Heart left ventricle (tissue), 16 donors: ENCODE measurements at regions of chr17 and their contacts with region 1.

Region 1: DNA sequence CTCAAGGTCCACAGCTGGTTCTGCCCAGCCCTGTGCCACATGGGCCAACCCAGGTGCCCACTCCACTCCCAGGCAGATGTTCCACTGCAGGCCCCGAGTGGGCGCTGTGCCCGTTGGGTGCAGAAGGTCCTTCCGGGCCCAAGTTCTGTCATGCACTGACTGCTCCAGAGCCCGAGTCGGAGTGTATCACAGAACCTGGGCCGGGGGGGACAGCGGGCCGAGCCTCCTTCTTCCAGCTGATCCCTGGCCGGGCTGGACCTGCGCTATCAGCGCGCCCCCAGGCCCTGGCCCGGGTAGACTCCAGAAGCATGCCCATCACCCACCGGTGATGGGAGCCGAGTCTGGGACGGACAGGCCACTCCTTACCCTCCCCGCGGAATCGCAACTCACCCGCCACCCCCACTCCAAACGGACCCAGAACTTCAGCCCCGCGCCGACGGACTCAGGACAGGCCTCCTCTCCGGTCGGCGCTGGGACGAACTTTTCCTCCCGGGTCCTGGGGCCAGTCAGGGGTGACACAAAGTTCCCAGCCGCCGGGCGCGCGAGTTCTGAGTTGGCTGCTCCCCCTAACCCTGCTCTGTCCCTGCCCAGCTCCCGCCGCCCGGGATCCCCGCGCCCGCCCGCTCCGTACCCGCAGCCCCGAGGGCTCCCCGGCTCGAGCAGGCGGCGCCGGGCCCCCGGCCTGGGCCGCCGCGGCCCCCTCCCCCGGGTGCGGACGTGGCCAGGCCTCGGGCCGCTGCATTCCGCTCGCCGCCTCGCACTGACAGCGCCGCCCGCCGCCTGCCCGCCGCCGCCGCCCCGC is at the start of gene COPZ2:
- DNase-seq: peak; percentile 70 to 85 (median 78)
- ATAC-seq: peak; percentile 65 to 93 (median 88)
- H3K4me3 ChIP-seq: peak within 1 kb of the TSS; percentile 35 to 89 (median 70)
- H3K27ac ChIP-seq: peak within 1 kb of the TSS; percentile 27 to 86 (median 80)
- H3K4me1 ChIP-seq: peaks cover 0 to 17% (median 11%) of the 10 kb centered on the region in 12 donors
- H3K27me3 ChIP-seq: peaks cover 0 to 16% (median 0%) of the 10 kb centered on the region in 9 donors
- CTCF ChIP-seq: peak; percentile 43 to 70 (median 54)
- POLR2A ChIP-seq: no peak
- total RNA-seq, gene COPZ2: 35.4 to 64.3 (median 54.8) TPM

Region 2: GRCh38 chr17:48047741-48048383 is 10.6 kb after region 1 on chr17 and contains the start of gene NFE2L1:
- intact Hi-C with region 1: loop called in 1 of 10 experiments (anchors 2 kb)
- DNase-seq: peak; percentile 99 to 100 (median 100)
- ATAC-seq: peak; percentile 86 to 95 (median 90)
- H3K4me3 ChIP-seq: peak within 1 kb of the TSS; percentile 52 to 96 (median 86)
- H3K27ac ChIP-seq: peak within 1 kb of the TSS; percentile 96 to 100 (median 99)
- H3K4me1 ChIP-seq: peaks cover 9 to 61% (median 49%) of the 10 kb centered on the region in 12 donors
- H3K27me3 ChIP-seq: no peaks in the 10 kb centered on the region
- CTCF ChIP-seq: no peak
- POLR2A ChIP-seq: peak in 1 of 2 donors; percentile 56
- total RNA-seq, gene NFE2L1: 375 to 1,055 (median 606) TPM

Region 3: GRCh38 chr17:48074315-48075081 is 37.3 kb after region 1 on chr17:
- intact Hi-C with region 1: loop called in 1 of 10 experiments (anchors 2 kb)
- DNase-seq: peak in 4 of 5 donors; percentile 74 to 80 (median 76)
- ATAC-seq: peak; percentile 75 to 87 (median 83)
- H3K4me3 ChIP-seq: no peak overlapping the region
- H3K27ac ChIP-seq: peak overlapping the region in 1 of 12 donors; percentile 37
- H3K4me1 ChIP-seq: peaks cover 0 to 9% (median 2%) of the 10 kb centered on the region in 12 donors
- H3K27me3 ChIP-seq: no peaks in the 10 kb centered on the region
- CTCF ChIP-seq: peak; percentile 74 to 90 (median 84)
- POLR2A ChIP-seq: no peak